Naive thymus-derived CD8-positive, alpha-beta T cell (primary cell): ENCODE measurements at regions of chr3 and their contacts with region 1.

Region 1: DNA sequence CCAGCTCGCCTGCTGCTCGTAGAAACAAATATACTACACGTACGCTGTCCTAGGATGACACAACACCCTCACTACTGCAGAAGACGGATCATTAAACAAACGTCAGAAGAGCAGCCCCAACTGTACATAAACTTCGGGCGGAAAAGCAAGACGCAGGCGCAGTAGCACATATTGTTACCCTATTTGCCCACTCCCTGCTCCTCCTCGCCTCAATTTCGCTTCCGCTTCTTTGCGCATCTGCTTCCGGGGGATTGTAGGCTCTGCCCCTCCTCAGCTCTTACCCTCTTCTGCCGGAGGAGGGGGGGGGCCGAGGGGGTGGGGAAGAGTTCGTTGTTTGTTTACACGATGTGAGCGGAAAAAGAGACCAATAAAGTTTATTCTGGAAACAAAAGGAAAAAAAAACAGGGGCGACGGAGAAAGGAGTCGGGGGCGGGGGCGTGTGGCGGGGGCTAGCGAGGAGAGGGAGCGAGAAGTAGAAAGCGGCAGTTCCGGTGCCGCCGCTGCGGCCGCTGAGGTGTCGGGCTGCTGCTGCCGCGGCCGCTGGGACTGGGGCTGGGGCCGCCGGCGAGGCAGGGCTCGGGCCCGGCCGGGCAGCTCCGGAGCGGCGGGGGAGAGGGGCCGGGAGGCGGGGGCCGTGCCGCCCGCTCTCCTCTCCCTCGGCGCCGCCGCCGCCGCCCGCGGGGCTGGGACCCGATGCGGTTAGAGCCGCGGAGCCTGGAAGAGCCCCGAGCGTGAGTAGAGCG is at the start of gene PIK3CA:
- DNase-seq: peak; percentile 78 to 98 (median 96)
- ATAC-seq: peak; percentile 67 to 78
- H3K4me3 Mint-ChIP-seq: peak within 1 kb of the TSS in 9 of 10 donors; percentile 93 to 99 (median 98)
- H3K27ac Mint-ChIP-seq: peak within 1 kb of the TSS; percentile 93 to 99 (median 98)
- H3K4me1 Mint-ChIP-seq: peaks cover 25 to 44% (median 37%) of the 10 kb centered on the region in 4 donors
- H3K27me3 Mint-ChIP-seq: no peaks in the 10 kb centered on the region
- polyA plus RNA-seq, gene PIK3CA: 11.4 to 20.3 (median 13.1) TPM

Region 2: GRCh38 chr3:179027326-179027900 is 120.6 kb before region 1 on chr3:
- POLR2A ChIA-PET with region 1: interaction called, 10 read pairs
- DNase-seq: peak in 4 of 10 donors; percentile 7 to 32 (median 20)
- ATAC-seq: peak; percentile 80 to 87
- H3K4me3 Mint-ChIP-seq: peak overlapping the region in 9 of 10 donors; percentile 33 to 83 (median 67)
- H3K27ac Mint-ChIP-seq: peak overlapping the region; percentile 70 to 96 (median 88)
- H3K4me1 Mint-ChIP-seq: peaks cover 8 to 38% (median 20%) of the 10 kb centered on the region in 4 donors
- H3K27me3 Mint-ChIP-seq: no peaks in the 10 kb centered on the region

Region 3: DNA sequence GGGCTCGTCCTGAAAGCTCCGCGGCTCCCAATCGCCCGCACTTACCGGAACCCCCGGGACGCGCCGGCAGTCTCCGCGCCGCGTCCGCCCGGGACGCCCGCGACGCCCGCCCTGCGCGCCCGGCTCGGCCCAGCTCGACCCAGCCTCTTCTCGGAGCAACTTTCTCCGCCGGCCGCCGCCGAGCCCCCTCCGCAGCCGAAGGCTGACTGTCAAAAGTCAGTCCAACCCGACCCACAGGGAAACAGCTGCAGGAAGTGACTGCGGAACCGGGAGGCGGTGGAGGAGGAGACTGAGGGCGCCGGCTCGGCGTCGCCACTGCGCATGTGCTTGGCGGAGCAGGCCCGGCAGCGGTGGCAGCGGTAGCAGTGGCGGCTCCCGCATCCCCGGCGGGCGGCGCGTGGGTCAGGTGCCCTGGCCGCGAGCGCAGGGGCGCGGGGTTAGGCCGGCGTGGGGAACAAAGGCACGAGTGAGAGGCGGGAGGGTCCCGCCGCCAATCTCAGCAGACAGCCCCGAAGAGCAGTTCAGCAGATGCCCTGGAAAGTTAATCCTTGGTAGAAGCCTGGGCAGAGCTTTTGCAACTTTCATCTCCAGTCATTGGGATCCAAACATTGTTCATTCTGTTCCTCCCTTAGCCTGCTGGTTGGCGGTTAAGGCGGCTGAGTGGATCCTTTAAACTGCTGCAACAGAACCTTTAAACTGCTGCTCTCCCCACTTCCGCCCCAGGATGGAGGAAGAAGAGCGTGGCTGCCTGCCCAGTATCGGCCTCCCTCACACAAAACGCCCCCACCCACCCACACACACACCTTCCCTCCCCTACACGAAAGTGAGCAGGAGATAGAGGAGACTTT is 76.3 kb before region 1 on chr3 and contains the start of gene ZMAT3:
- POLR2A ChIA-PET with region 1: interaction called, 30 read pairs
- DNase-seq: peak; percentile 74 to 90 (median 80)
- ATAC-seq: peak; percentile 76 to 87
- H3K4me3 Mint-ChIP-seq: peak within 1 kb of the TSS; percentile 88 to 99 (median 98)
- H3K27ac Mint-ChIP-seq: peak within 1 kb of the TSS; percentile 92 to 97 (median 94)
- H3K4me1 Mint-ChIP-seq: peaks cover 27 to 49% (median 43%) of the 10 kb centered on the region in 4 donors
- H3K27me3 Mint-ChIP-seq: no peaks in the 10 kb centered on the region
- polyA plus RNA-seq, gene ZMAT3: 15.1 to 16.3 (median 15.7) TPM

Region 4: DNA sequence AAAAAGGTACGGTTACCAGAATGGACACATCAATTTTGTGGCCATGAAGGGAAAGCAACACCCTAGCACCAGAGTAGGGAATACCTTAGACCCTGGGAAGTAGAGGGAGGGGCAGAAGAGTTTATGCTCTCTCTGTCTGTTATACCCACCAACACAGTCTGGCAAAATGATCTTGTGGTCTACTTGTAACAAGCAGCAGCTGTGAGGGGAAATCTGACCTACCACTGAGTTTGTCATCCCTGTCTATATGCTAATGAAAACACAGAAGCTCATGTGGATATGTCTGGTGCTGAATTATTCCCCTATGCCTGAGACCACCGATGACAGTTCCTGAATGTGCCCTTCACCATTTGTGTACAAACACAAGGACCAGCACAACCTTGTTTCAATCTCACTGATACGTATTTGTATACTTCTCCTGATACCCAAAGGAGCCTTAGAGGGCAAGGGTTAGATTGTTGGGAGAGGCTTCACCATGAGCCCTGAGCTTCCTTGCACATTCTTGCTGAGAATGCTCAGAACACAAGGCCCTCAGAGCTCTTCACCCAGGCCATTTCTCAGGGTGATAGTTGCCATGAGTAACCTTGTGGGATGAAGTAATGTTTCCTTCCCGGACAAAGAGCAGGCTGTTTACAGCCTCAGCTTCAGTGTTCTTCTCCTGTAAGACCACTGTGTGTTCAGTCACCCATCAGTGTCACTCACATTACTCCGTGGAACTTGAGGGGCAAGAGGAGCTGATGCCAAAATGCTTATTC is 150.1 kb after region 1 on chr3:
- POLR2A ChIA-PET with region 1: no interaction called
- DNase-seq: no peak
- ATAC-seq: no peak
- H3K4me3 Mint-ChIP-seq: no peak overlapping the region
- H3K27ac Mint-ChIP-seq: no peak overlapping the region
- H3K4me1 Mint-ChIP-seq: no peaks in the 10 kb centered on the region
- H3K27me3 Mint-ChIP-seq: peaks cover 0 to 11% (median 4%) of the 10 kb centered on the region in 5 donors

Region 5: DNA sequence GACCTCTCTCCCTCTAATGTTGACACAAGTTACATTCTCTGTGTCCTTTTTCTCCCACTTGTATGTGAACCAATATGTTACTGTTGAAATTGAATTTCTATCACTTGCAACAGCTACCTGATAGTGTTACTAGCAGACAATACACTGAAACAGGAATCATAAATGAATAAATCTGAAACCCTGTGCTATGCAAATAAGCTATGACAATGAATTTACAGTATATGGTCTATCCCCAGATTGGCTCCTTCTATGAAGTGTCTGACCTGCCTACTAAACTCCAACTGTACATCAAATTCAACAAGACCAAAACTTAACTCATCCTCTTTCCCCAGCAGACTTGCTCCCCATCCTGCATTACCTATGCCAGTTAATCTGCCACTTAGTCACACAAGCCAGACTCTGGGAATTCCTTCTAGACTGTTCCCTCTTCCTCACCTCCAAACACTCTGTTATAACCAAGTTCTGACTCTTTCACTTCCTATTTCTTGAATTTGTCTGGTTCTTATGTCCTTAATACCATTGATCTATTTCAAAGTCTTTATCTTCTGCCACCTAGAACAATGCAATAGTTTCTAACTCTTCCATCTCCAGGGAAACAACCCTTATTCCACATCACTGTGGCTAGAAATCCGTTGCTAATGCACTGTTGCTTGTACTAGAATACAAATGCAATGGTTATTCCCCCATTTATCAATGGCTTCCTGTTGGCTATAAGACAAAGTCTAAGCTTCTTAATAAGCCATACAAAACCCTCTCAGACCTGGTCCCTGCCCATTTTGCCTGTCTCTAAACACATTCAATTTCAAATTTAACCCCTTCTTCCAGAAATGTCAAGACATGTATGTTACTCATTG is 161.4 kb after region 1 on chr3:
- POLR2A ChIA-PET with region 1: interaction called, 15 read pairs
- DNase-seq: no peak
- ATAC-seq: no peak
- H3K4me3 Mint-ChIP-seq: no peak overlapping the region
- H3K27ac Mint-ChIP-seq: no peak overlapping the region
- H3K4me1 Mint-ChIP-seq: no peaks in the 10 kb centered on the region
- H3K27me3 Mint-ChIP-seq: no peaks in the 10 kb centered on the region

Region 6: DNA sequence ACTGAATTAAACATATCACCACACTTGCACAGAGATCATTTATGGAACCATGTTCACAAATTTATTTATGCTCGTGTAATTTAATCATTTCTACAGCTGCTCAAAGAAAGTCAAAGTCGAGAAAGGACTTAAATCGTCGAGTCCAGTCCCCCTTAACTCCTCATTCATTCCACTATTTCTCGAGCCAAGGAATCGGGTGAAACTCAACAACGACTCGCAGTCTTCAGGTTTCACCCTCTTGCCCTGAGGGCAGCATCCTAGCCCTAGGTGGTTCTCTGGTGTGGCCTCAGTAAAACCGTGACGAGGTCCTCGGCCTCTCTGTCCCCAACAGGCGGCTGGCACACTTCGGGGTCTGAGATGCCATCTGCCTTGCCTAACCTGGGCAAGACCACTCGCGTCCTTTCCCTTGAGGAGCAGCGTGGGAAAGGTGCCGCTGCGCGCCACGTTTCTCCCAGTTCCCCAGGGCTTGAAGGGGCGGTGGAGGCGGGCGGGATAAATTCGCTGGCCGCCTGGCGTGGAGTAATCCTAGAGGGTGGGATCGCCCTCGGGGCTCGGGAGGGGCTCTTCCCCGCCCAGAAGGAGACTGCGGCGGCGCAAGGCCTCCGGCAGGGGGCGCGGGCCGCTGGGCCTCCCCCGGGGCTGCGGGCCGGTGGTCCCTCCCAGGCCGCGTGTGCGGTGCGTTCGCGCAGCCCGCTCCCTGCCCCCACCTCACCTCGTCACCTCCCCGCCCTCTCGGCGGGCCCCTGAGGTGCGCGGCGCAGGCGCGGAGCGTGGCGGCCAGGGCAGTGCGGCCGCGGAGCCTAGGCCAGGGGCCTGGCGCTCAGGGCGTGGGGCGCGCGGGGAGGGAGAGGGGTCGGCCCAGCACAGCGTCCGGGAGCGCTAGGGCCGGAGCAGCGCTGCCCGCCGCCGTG is 174.5 kb after region 1 on chr3 and contains the start of gene ZNF639:
- POLR2A ChIA-PET with region 1: interaction called, 72 read pairs
- DNase-seq: peak; percentile 82 to 92 (median 89)
- ATAC-seq: peak; percentile 80 to 86
- H3K4me3 Mint-ChIP-seq: peak within 1 kb of the TSS; percentile 83 to 97 (median 90)
- H3K27ac Mint-ChIP-seq: peak within 1 kb of the TSS; percentile 92 to 96 (median 95)
- H3K4me1 Mint-ChIP-seq: peaks cover 13 to 45% (median 37%) of the 10 kb centered on the region in 4 donors
- H3K27me3 Mint-ChIP-seq: no peaks in the 10 kb centered on the region
- polyA plus RNA-seq, gene ZNF639: 56.5 to 63.0 (median 60.1) TPM

Region 7: DNA sequence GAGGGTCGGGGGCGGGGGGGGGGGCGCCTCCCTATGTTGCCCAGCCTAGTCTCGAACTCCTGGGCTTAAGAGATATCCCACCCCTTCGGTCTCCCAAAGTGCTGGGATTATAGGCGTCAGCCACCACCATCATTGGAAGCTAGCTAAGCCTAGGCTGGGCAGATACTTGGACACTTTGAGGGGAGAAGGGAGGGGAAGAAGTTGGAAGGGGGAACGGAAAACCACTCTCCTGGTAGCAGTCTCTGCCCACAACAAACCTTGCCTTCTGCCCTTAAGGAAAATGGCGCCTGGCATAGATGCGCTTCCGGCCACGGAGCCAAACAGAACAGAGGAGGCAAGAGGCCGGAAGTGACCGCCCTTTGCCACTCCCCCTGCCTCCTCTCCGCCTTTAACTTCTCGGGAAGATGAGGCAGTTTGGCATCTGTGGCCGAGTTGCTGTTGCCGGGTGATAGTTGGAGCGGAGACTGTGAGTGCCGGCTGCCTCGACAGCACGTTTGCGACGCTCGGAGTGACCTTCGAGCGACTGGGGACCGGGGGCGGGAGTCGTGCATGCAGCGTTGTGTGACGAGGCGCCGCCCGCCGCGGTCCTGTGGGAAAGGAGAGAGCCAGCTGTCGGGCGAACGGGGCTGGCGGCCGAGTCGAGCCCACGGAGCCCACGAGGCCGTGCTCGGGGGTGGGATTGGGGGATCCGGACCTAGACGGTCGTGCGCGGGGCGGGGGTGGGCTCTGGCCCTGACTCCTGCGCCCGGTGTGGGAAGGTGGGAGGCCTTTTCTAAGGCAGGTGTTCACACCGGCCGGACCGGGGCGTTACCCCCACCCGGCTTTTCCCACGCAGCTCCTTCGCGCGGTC is 199.5 kb after region 1 on chr3 and contains the start of gene MFN1:
- POLR2A ChIA-PET with region 1: interaction called, 19 read pairs
- DNase-seq: peak; percentile 73 to 95 (median 86)
- ATAC-seq: peak; percentile 96 to 99
- H3K4me3 Mint-ChIP-seq: peak within 1 kb of the TSS; percentile 95 to 100 (median 97)
- H3K27ac Mint-ChIP-seq: peak within 1 kb of the TSS; percentile 91 to 99 (median 97)
- H3K4me1 Mint-ChIP-seq: peaks cover 6 to 45% (median 24%) of the 10 kb centered on the region in 4 donors
- H3K27me3 Mint-ChIP-seq: no peaks in the 10 kb centered on the region
- polyA plus RNA-seq, gene MFN1: 4.9 to 9.5 (median 8.8) TPM